ENCODE measurements at regions of chr2 and their contacts with region 1.

Region 1: DNA sequence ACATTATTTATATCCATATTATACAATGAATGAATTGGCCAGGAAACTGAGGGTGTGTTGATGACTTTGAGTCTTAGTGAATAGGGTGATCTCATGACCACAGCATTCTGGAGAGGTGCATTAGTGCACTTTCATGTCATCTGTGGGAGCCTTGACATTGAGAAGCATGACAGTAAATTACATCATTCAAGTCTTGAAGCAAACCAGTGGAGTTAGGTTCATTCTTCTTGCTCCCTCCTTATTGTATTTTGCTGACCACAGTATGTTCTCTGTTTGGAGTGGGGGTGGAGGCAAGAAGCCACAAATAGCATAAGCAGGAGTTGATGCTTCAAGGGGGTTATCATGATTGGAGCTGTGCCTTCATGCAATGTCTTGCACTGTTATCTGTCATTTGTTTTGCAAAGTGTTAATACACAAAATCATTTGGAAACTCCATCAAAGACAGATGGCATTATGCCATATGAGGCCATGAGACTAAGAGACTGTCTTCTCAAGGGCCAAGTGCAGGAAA is 680.2 kb downstream of the NYAP2 start:
- DNase-seq: peak; percentile 96
- H3K4me3 ChIP-seq: no peak overlapping the region
- H3K27ac ChIP-seq: peak overlapping the region; percentile 94
- H3K4me1 ChIP-seq: peaks cover 46% of the 10 kb centered on the region
- H3K27me3 ChIP-seq: no peaks in the 10 kb centered on the region
- CTCF ChIP-seq: no peak

Region 2: GRCh38 chr2:226063704-226064440 is 15.9 kb before region 1 on chr2:
- CTCF ChIA-PET with region 1: no interaction called
- dilution Hi-C with region 1: no loop called
- in situ Hi-C with region 1: no loop called
- intact Hi-C with region 1: loop called (anchors 1 kb)
- DNase-seq: peak; percentile 97
- H3K4me3 ChIP-seq: no peak overlapping the region
- H3K27ac ChIP-seq: peak overlapping the region; percentile 87
- H3K4me1 ChIP-seq: peaks cover 34% of the 10 kb centered on the region
- H3K27me3 ChIP-seq: no peaks in the 10 kb centered on the region
- CTCF ChIP-seq: no peak

Region 3: GRCh38 chr2:226234183-226234582 is 154.5 kb after region 1 on chr2:
- CTCF ChIA-PET with region 1: no interaction called
- dilution Hi-C with region 1: no loop called
- in situ Hi-C with region 1: no loop called
- intact Hi-C with region 1: no loop called
- DNase-seq: no peak
- H3K4me3 ChIP-seq: no peak overlapping the region
- H3K27ac ChIP-seq: no peak overlapping the region
- H3K4me1 ChIP-seq: no peaks in the 10 kb centered on the region
- H3K27me3 ChIP-seq: no peaks in the 10 kb centered on the region
- CTCF ChIP-seq: no peak